Calu3 (cell line): ENCODE measurements at regions of chr10 and their contacts with region 1.

Region 1: GRCh38 chr10:31004611-31005193 is 27.0 kb downstream of the ZNF438 start:
- DNase-seq: no peak
- H3K4me3 Mint-ChIP-seq: no peak overlapping the region
- H3K27ac Mint-ChIP-seq: peak overlapping the region; percentile 17
- H3K4me1 Mint-ChIP-seq: peaks cover 59% of the 10 kb centered on the region
- H3K27me3 Mint-ChIP-seq: no peaks in the 10 kb centered on the region
- CTCF ChIP-seq: no peak

Region 2: DNA sequence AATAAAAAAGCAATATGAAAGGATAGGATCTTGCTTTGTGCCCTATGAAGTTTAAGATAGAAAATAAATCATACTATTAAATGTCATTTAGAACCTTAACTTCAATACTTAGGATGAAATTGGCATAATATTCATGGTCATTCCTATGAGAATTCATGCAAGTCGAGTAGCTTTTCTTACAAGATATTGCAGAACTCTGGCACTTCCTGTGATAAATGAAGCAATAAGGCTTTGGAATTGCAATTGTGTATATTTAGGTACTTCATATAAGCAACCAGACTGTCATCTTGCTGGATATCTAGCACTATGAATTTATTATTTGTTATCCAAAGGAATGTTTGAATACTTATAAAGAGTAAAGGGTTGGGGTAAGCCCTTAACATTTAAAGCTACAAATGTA is 89.6 kb before region 1 on chr10:
- CTCF ChIA-PET with region 1: no interaction called
- intact Hi-C with region 1: no loop called
- DNase-seq: no peak
- H3K4me3 Mint-ChIP-seq: no peak overlapping the region
- H3K27ac Mint-ChIP-seq: no peak overlapping the region
- H3K4me1 Mint-ChIP-seq: no peaks in the 10 kb centered on the region
- H3K27me3 Mint-ChIP-seq: no peaks in the 10 kb centered on the region
- CTCF ChIP-seq: no peak

Region 3: GRCh38 chr10:30967650-30968410 is 36.9 kb before region 1 on chr10:
- CTCF ChIA-PET with region 1: interaction called, 5 read pairs
- intact Hi-C with region 1: loop called (anchors 5 kb)
- DNase-seq: no peak
- H3K4me3 Mint-ChIP-seq: peak overlapping the region; percentile 4
- H3K27ac Mint-ChIP-seq: peak overlapping the region; percentile 34
- H3K4me1 Mint-ChIP-seq: peaks cover 33% of the 10 kb centered on the region
- H3K27me3 Mint-ChIP-seq: no peaks in the 10 kb centered on the region
- CTCF ChIP-seq: no peak

Region 4: DNA sequence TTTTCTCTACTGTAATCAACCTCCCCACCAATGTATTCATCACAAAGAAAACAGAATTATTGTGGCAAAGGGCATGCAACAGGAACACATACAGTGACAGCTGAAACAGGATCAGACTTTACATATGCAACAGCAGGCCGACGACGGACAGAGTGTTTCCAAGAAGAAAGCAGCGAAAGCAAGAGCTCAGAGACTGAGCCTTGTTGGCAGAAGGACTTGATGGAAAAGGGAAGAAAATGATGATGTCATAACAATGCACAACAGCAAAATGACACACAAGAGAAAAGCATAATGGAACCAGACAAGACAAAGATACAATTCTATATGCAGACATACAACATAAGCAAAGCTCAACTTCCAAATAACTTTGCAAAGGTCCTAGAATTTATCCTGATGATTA is 817.4 kb after region 1 on chr10:
- CTCF ChIA-PET with region 1: no interaction called
- intact Hi-C with region 1: no loop called
- DNase-seq: no peak
- H3K4me3 Mint-ChIP-seq: no peak overlapping the region
- H3K27ac Mint-ChIP-seq: no peak overlapping the region
- H3K4me1 Mint-ChIP-seq: no peaks in the 10 kb centered on the region
- H3K27me3 Mint-ChIP-seq: no peaks in the 10 kb centered on the region
- CTCF ChIP-seq: no peak